Naive thymus-derived CD4-positive, alpha-beta T cell (primary cell): ENCODE measurements at regions of chr5 and their contacts with region 1.

Region 1: GRCh38 chr5:76402886-76403765 is at the start of gene IQGAP2:
- DNase-seq: peak; percentile 88 to 94 (median 90)
- ATAC-seq: peak; percentile 73
- H3K4me3 ChIP-seq: peak within 1 kb of the TSS; percentile 81
- H3K4me3 Mint-ChIP-seq: peak within 1 kb of the TSS; percentile 87 to 99 (median 92)
- H3K27ac ChIP-seq: peak within 1 kb of the TSS; percentile 94
- H3K27ac Mint-ChIP-seq: peak within 1 kb of the TSS; percentile 94 to 100 (median 97)
- H3K4me1 ChIP-seq: peaks cover 19 to 20% of the 10 kb centered on the region in 2 donors
- H3K4me1 Mint-ChIP-seq: peaks cover 35 to 62% (median 55%) of the 10 kb centered on the region in 7 donors
- H3K27me3 ChIP-seq: no peaks in the 10 kb centered on the region
- H3K27me3 Mint-ChIP-seq: peaks cover 0 to 14% (median 0%) of the 10 kb centered on the region in 5 donors
- total RNA-seq, gene IQGAP2: 69.1 to 114 (median 88.0) TPM

Region 2: DNA sequence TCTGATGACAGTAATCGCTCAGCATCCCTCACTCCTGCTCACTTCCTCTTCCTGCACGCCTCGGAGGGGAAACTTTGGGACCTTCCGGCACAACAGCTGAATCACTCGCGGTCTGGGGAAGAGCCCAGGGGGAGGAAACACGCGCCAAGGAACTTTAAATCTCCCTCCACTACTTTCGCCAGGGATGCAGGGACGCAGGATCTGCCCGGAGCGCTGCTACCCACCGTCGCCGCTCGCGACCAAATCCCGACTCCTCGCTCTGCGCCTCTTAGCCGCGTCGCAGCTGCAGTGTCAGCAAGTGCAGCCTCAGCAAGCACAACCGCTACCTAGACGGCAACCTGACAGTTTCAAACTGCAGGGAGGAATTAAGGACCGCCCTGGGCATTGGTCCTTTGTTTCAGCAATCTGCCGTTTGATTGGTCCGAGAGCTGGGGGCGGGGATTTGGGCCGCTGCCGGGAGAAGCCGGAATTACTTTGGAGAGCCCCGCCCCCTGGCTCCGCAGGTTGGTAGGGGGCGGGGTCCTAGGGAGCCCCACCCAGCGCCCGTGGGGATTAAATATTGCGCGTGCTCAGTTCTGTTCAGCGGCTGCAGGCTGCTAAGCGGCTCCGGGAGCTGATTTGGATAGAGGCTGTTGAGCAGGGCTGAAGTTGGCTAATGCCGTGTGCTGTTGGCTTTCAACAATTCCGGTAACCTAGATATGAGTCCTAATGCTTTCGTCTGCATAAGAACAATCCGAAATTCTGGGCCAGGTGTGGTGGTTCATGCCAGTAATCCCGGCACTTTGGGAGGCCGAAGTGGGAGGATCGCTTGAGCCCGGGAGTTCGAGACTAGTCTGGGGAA is 685.8 kb before region 1 on chr5 and contains the start of gene POC5:
- CTCF ChIA-PET with region 1: no interaction called
- POLR2A ChIA-PET with region 1: no interaction called
- intact Hi-C with region 1: loop called (anchors 2 to 5 kb)
- DNase-seq: peak; percentile 93 to 99 (median 98)
- ATAC-seq: peak; percentile 97
- H3K4me3 ChIP-seq: peak within 1 kb of the TSS; percentile 74
- H3K4me3 Mint-ChIP-seq: peak within 1 kb of the TSS; percentile 93 to 100 (median 99)
- H3K27ac ChIP-seq: peak within 1 kb of the TSS; percentile 78
- H3K27ac Mint-ChIP-seq: peak within 1 kb of the TSS; percentile 92 to 100 (median 97)
- H3K4me1 ChIP-seq: peaks cover 5 to 8% of the 10 kb centered on the region in 2 donors
- H3K4me1 Mint-ChIP-seq: peaks cover 26 to 47% (median 37%) of the 10 kb centered on the region in 7 donors
- H3K27me3 ChIP-seq: no peaks in the 10 kb centered on the region
- H3K27me3 Mint-ChIP-seq: peaks cover 0 to 10% (median 0%) of the 10 kb centered on the region in 5 donors
- total RNA-seq, gene POC5: 8.5 to 17.9 (median 15.0) TPM

Region 3: DNA sequence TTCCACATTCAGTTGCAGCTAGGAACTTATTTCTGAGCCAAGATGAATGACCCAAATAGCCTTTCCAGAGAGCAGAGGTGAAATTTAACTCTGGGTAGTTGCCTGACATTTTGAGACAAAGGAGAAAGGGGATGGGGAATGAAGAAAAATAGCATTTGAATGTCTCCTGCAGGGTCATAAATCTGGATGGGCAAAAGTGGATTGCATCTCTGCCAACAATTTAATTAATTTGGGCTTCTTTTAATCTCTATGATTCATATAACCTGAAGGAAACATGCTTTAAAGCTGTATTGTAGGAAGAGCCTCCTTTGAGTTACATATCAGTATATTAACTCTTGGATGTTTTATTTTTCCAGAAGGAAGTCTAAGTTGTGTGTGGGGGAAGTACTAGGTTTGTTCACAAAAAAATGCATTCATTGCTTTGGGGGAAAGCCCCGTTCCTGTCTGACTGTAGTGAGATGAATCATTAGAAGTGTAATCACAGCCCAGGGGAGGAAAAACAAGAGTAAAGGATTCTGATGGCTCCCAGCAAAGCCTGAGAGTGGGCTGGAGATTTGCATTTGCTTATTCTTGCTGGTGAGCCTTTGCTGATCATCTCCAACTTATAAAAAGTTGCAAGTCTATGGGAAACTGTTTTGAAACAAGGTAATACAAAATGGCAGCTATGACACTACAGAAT is 133.1 kb before region 1 on chr5:
- CTCF ChIA-PET with region 1: no interaction called
- POLR2A ChIA-PET with region 1: no interaction called
- intact Hi-C with region 1: loop called in 1 of 2 experiments (anchors 5 kb)
- DNase-seq: peak in 1 of 9 donors; percentile 44
- ATAC-seq: peak; percentile 22
- H3K4me3 ChIP-seq: no peak overlapping the region
- H3K4me3 Mint-ChIP-seq: peak overlapping the region in 1 of 10 donors; percentile 77
- H3K27ac ChIP-seq: no peak overlapping the region
- H3K27ac Mint-ChIP-seq: peak overlapping the region in 1 of 9 donors; percentile 89
- H3K4me1 ChIP-seq: no peaks in the 10 kb centered on the region
- H3K4me1 Mint-ChIP-seq: peaks cover 0 to 42% (median 4%) of the 10 kb centered on the region in 7 donors
- H3K27me3 ChIP-seq: no peaks in the 10 kb centered on the region
- H3K27me3 Mint-ChIP-seq: peaks cover 0 to 6% (median 4%) of the 10 kb centered on the region in 5 donors

Region 4: DNA sequence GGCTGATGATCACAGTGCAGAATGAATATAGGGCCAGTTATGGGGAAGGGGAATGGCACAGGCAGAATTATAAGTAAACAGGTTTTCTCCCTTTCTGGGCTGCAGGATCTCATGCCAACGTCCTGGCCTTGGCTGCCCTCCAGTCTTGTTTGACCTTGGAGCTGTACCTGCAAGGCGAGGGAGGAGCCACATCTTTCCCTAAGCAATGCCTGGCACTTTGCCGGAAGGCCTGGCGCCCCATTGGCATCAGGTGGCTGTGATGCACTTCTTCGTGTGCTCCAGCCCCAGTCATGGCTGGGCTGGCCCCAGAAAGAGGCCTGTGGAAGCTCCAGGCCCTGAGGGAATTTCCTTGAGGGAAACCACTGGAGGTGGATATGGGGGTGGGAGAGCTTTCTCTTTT is 16.8 kb before region 1 on chr5:
- CTCF ChIA-PET with region 1: interaction called, 6 read pairs
- POLR2A ChIA-PET with region 1: interaction called, 36 read pairs
- intact Hi-C with region 1: no loop called
- DNase-seq: no peak
- ATAC-seq: no peak
- H3K4me3 ChIP-seq: no peak overlapping the region
- H3K4me3 Mint-ChIP-seq: no peak overlapping the region
- H3K27ac ChIP-seq: no peak overlapping the region
- H3K27ac Mint-ChIP-seq: peak overlapping the region in 1 of 9 donors; percentile 30
- H3K4me1 ChIP-seq: peaks cover 36 to 38% of the 10 kb centered on the region in 2 donors
- H3K4me1 Mint-ChIP-seq: peaks cover 31 to 58% (median 50%) of the 10 kb centered on the region in 7 donors
- H3K27me3 ChIP-seq: no peaks in the 10 kb centered on the region
- H3K27me3 Mint-ChIP-seq: peaks cover 0 to 2% (median 0%) of the 10 kb centered on the region in 5 donors

Region 5: GRCh38 chr5:76544268-76544926 is 141.3 kb after region 1 on chr5:
- CTCF ChIA-PET with region 1: interaction called, 70 read pairs
- POLR2A ChIA-PET with region 1: interaction called, 54 read pairs
- intact Hi-C with region 1: loop called (anchors 1 kb)
- DNase-seq: peak in 8 of 9 donors; percentile 37 to 69 (median 58)
- ATAC-seq: peak; percentile 31
- H3K4me3 ChIP-seq: peak overlapping the region; percentile 33
- H3K4me3 Mint-ChIP-seq: peak overlapping the region; percentile 43 to 80 (median 74)
- H3K27ac ChIP-seq: peak overlapping the region; percentile 73
- H3K27ac Mint-ChIP-seq: peak overlapping the region; percentile 93 to 98 (median 96)
- H3K4me1 ChIP-seq: peaks cover 57 to 86% of the 10 kb centered on the region in 2 donors
- H3K4me1 Mint-ChIP-seq: peaks cover 64 to 89% (median 84%) of the 10 kb centered on the region in 7 donors
- H3K27me3 ChIP-seq: no peaks in the 10 kb centered on the region
- H3K27me3 Mint-ChIP-seq: no peaks in the 10 kb centered on the region

Region 6: DNA sequence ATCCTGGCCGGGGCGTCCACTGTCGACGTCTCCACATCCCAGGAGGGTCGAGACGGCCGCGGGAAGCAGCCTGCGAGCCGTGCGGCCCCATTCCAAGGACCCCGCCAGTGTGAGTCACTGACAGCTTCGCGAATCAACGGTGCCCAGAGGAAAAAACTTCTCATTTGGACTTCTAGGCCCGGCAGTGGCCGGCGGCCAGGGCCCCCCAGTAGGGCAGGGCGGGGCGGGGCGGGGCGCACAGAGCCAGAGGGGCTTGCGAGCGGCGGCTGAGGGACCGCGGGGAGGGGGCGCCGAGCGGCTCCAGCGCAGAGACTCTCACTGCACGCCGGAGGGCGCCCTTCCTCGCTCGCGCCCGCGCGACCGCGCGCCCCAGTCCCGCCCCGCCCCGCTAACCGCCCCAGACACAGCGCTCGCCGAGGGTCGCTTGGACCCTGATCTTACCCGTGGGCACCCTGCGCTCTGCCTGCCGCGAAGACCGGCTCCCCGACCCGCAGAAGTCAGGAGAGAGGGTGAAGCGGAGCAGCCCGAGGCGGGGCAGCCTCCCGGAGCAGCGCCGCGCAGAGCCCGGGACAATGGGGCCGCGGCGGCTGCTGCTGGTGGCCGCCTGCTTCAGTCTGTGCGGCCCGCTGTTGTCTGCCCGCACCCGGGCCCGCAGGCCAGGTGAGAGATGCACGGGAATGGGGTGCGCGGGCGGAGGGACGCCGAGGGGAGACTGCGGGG is 312.8 kb after region 1 on chr5 and contains the start of gene F2R:
- CTCF ChIA-PET with region 1: no interaction called
- POLR2A ChIA-PET with region 1: no interaction called
- intact Hi-C with region 1: loop called in 1 of 2 experiments (anchors 10 kb)
- DNase-seq: peak in 8 of 9 donors; percentile 17 to 56 (median 21)
- ATAC-seq: peak; percentile 90
- H3K4me3 ChIP-seq: peak within 1 kb of the TSS; percentile 82
- H3K4me3 Mint-ChIP-seq: peak within 1 kb of the TSS; percentile 48 to 88 (median 82)
- H3K27ac ChIP-seq: no peak within 1 kb of the TSS
- H3K27ac Mint-ChIP-seq: peak within 1 kb of the TSS in 3 of 9 donors; percentile 11 to 79 (median 71)
- H3K4me1 ChIP-seq: peaks cover 16 to 17% of the 10 kb centered on the region in 2 donors
- H3K4me1 Mint-ChIP-seq: peaks cover 11 to 36% (median 27%) of the 10 kb centered on the region in 7 donors
- H3K27me3 ChIP-seq: peaks cover 0 to 17% of the 10 kb centered on the region in 2 donors
- H3K27me3 Mint-ChIP-seq: peaks cover 35 to 42% (median 40%) of the 10 kb centered on the region in 5 donors
- total RNA-seq, gene F2R: 0.65 to 8.2 (median 1.2) TPM